IMR-90 (cell line): ENCODE measurements at regions of chr15 and their contacts with region 1.

Region 1: GRCh38 chr15:84035399-84035766 is 200.2 kb upstream of the GOLGA6L4 start:
- DNase-seq: peak; percentile 55
- ATAC-seq: peak; percentile 91
- H3K4me3 ChIP-seq: no peak overlapping the region
- H3K27ac ChIP-seq: no peak overlapping the region
- H3K4me1 ChIP-seq: no peaks in the 10 kb centered on the region
- H3K27me3 ChIP-seq: no peaks in the 10 kb centered on the region
- CTCF ChIP-seq: peak; percentile 51
- POLR2A ChIP-seq: no peak
- RAD21 ChIP-seq: peak; percentile 52

Region 2: DNA sequence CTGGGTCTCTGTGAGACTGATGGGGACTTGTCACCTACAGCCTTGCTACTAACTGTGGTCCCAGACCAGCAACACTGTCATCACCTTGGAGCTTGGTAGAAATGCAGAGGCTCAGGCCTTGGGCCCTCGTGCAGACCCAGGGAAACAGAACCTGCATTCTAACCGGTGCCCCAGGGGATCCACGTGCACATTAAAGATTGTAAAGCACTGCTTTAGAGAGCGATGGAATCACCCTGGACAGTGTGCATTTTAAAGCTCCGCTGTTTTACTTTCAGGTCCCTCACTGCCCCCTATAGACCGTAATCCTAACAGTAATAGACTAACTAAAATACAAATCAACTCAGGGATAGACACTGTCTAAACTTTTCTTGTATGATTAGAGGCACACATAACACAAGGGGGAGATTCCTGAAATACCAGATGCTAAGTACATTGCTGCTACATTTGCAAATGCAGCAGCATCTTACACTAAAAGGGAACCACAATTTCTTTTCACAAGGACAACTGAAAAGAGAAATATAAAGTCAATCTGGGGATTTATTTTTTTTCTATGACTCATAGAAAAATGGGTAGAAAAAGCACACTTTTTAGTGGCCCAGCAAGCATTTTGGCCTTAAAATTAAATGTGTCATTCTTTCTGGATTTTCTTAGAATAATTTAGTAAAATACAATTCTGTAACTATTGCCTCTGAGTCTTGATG is 598.8 kb before region 1 on chr15:
- CTCF ChIA-PET with region 1: no interaction called
- POLR2A ChIA-PET with region 1: no interaction called
- dilution Hi-C with region 1: no loop called
- in situ Hi-C with region 1: no loop called
- intact Hi-C with region 1: loop called (anchors 1 kb)
- DNase-seq: peak; percentile 52
- ATAC-seq: peak; percentile 83
- H3K4me3 ChIP-seq: no peak overlapping the region
- H3K27ac ChIP-seq: no peak overlapping the region
- H3K4me1 ChIP-seq: no peaks in the 10 kb centered on the region
- H3K27me3 ChIP-seq: no peaks in the 10 kb centered on the region; the same call in 1 of the 2 replicates
- CTCF ChIP-seq: peak; percentile 58
- POLR2A ChIP-seq: no peak
- RAD21 ChIP-seq: peak; percentile 63

Region 3: DNA sequence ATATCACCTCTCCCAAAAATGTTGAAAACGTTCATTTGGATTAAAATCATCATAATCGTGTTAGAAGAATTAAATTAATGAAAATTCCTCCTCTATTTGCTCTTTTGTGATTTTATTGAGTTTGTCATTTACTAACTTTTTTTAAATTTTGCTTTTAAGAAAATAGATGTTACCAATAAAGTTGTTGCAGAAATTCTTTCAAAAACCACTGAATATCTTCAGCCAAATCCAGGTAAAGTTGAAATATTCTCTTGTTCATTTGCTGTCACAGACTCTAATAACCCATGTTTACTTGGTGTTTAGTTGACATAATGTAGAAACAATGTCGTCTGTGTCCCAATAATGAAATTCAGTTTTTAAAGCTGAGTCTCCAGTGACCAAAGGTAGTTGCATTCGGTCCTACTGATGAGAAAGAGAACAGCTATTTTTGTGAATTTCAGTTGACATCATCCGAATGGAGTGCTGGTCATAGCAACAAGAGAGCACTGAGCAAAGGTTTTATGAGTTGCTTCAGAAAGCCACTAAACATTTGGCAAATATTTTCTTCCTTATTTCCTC is 470.3 kb before region 1 on chr15:
- CTCF ChIA-PET with region 1: no interaction called
- POLR2A ChIA-PET with region 1: no interaction called
- dilution Hi-C with region 1: no loop called
- in situ Hi-C with region 1: no loop called
- intact Hi-C with region 1: loop called (anchors 1 kb)
- DNase-seq: no peak
- ATAC-seq: no peak
- H3K4me3 ChIP-seq: no peak overlapping the region
- H3K27ac ChIP-seq: no peak overlapping the region
- H3K4me1 ChIP-seq: no peaks in the 10 kb centered on the region
- H3K27me3 ChIP-seq: no peaks in the 10 kb centered on the region
- CTCF ChIP-seq: no peak
- POLR2A ChIP-seq: no peak
- RAD21 ChIP-seq: no peak

Region 4: DNA sequence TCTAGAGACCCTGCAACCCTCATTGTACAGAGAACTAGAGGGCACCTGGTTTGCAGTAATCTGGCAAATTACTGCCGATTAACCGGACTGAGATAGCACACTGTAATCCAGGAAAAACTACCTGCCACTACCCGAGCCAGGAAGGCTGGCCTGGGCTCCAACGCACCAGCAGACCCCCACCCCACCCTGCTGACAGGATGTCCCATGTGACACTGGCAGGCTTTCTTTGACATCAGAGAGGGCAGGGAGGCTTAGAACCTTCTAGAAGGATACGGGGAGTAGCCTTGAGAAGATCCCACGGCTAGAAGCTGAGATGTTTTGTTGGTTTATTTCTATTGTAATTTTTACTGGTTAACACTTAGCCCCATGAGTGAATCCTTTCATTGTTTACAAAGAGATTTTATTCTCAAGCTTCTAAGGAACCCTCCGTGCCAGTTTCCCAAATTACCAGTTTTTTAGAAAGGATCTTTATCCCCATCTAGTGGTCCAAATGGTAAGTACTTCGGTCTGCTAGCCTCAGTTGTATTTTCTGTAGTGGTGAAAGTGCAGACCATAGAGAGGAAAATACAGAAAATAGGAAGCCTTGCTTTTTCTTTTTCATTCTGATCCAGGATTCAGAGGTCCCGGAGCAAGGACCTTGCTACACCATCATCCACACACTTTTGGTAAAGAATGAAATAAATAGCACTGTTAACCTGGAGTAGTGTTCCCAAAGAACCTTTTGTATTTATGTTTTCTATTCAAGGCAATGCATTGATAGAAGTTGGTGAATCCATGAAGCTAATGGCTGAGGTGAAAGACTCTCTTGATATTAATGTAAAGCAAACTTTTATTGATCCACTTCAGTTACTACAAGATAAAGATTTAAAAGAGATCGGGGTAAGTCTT is 463.3 kb before region 1 on chr15:
- CTCF ChIA-PET with region 1: no interaction called
- POLR2A ChIA-PET with region 1: no interaction called
- dilution Hi-C with region 1: no loop called
- in situ Hi-C with region 1: no loop called
- intact Hi-C with region 1: loop called (anchors 2 kb)
- DNase-seq: peak; percentile 19
- ATAC-seq: peak; percentile 84
- H3K4me3 ChIP-seq: no peak overlapping the region
- H3K27ac ChIP-seq: no peak overlapping the region
- H3K4me1 ChIP-seq: no peaks in the 10 kb centered on the region
- H3K27me3 ChIP-seq: no peaks in the 10 kb centered on the region
- CTCF ChIP-seq: peak; percentile 51
- POLR2A ChIP-seq: no peak
- RAD21 ChIP-seq: peak; percentile 25; the same call in 1 of the 2 replicates

Region 5: DNA sequence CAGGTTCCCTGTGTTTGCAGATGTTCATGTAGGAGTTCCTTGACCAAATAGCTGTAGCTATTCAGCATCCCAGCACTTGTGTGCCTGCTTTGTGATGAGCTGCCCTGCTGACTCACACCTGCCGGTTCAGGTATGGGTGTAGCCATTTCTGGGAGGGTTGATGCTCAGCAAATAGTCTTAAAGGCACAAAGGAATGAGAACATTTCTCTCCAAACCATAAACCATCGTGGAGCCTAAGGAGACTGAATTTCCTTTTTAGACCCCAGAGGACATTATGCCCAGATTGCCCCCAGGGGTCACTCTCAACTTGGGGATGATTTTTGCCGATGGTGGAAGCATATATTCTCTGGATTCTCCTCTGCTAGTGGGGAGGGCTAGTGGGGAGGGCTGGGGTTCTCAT is 300.9 kb before region 1 on chr15:
- CTCF ChIA-PET with region 1: no interaction called
- POLR2A ChIA-PET with region 1: no interaction called
- dilution Hi-C with region 1: no loop called
- in situ Hi-C with region 1: no loop called
- intact Hi-C with region 1: loop called (anchors 1 kb)
- DNase-seq: no peak
- ATAC-seq: no peak
- H3K4me3 ChIP-seq: no peak overlapping the region
- H3K27ac ChIP-seq: no peak overlapping the region
- H3K4me1 ChIP-seq: no peaks in the 10 kb centered on the region
- H3K27me3 ChIP-seq: no peaks in the 10 kb centered on the region
- CTCF ChIP-seq: no peak; the same call in 1 of the 2 replicates
- POLR2A ChIP-seq: no peak
- RAD21 ChIP-seq: no peak